ENCODE measurements at regions of chr20 and their contacts with region 1.

Region 1: DNA sequence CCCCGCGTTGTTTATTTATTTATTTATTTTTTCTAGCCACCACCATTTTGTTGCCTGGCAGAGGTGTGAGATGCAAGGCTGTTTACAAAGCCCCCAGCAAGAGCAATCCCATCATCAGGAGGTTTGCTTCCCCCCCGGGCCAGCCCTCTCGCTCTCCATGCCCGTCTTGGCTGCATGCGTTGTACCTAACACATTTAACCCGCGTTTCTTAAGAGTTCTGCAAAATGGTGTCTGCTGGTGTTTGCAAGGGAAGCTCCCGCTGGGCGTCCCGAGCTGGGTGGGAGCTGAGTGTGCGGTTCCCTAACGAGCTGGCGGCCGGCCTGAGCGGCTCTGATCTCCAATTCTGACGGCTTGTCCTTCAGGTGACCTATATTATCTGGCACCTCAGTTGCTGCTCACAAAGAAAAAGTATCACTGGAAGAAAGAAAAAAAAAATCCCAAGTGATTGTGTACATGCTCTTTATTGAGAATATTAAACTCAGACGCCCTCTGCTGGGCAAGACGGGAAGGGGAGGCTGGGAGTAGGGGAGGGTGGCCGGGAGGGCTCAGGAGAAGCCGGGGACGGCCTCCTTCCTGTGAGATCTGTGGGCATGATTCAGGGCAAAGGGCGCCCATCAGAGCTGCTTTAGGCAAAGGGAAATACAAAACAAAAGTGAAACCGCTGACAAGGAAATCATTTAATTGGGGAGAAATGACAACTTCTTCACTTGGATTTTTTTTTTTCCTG is 154.8 kb downstream of the BCAS1 start:
- DNase-seq: peak; percentile 97
- ATAC-seq: peak; percentile 87

Region 2: GRCh38 chr20:53578492-53579222 is 337.0 kb before region 1 on chr20:
- intact Hi-C with region 1: loop called (anchors 1 kb)
- DNase-seq: no peak
- ATAC-seq: peak; percentile 73

Region 3: GRCh38 chr20:53594068-53595017 is 321.3 kb before region 1 on chr20:
- intact Hi-C with region 1: loop called (anchors 1 kb)
- DNase-seq: peak; percentile 99
- ATAC-seq: peak; percentile 94

Region 4: DNA sequence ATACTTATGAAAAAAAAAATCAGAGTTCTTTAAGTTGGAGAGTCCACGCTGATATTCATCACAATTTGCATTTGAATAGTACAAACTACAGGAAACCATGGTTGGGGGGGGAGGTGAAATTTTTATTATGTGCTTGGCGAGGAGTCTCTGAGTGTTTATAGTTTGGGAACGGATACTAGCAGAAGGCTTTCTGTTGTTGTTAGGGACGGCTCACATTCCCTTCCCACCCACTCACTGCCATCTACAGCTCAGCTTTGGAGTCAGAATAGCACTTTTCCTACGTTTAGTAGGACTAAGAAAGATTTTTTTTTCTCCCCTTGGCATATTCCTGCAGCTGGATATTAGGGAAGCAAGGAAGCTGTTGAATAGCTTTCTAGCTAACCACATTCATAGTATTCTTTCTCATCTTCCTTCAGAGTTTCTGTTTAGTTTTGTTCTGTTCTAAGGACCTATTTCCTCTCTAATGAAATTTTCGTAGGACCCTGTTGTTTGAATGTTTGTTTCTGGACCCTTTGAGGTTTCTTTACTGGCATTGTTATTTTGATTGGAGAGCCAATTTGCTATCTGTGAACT is 86.8 kb before region 1 on chr20:
- intact Hi-C with region 1: loop called (anchors 10 kb)
- DNase-seq: no peak
- ATAC-seq: peak; percentile 65

Region 5: GRCh38 chr20:53869466-53870258 is 45.9 kb before region 1 on chr20:
- intact Hi-C with region 1: loop called (anchors 5 kb)
- DNase-seq: no peak
- ATAC-seq: peak; percentile 90

Region 6: GRCh38 chr20:53939572-53940359 is 24.2 kb after region 1 on chr20:
- intact Hi-C with region 1: loop called (anchors 1 kb)
- DNase-seq: peak; percentile 93
- ATAC-seq: peak; percentile 90